PC-9 (cell line): ENCODE measurements at regions of chr12 and their contacts with region 1.

Region 1: GRCh38 chr12:26378711-26379110 is 183.3 kb downstream of the SSPN start:
- DNase-seq: no peak
- H3K4me3 ChIP-seq: no peak overlapping the region
- H3K27ac ChIP-seq: no peak overlapping the region
- H3K4me1 ChIP-seq: no peaks in the 10 kb centered on the region
- H3K27me3 ChIP-seq: no peaks in the 10 kb centered on the region
- CTCF ChIP-seq: no peak

Region 2: DNA sequence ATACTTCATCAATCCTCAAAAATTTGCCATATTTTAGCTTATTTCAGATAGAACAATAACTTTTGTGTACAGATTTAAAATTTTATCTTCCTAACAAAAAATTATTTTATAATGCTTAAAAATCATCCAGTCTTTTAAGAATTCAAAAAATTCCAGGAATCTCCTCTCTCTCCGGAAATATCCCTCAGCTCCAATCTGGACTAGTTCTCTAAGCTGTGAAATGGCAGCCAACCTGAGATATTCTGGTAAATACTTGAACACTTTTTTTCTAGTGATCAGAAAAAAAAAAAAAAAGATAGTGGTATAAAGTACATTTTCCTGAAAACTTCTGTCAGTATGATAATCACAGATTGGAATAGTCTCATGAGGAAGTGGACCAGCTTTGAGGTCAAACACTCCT is 125.8 kb before region 1 on chr12:
- CTCF ChIA-PET with region 1: no interaction called
- POLR2A ChIA-PET with region 1: interaction called, 10 read pairs
- intact Hi-C with region 1: no loop called
- DNase-seq: no peak
- H3K4me3 ChIP-seq: no peak overlapping the region
- H3K27ac ChIP-seq: no peak overlapping the region
- H3K4me1 ChIP-seq: peaks cover 15% of the 10 kb centered on the region
- H3K27me3 ChIP-seq: no peaks in the 10 kb centered on the region
- CTCF ChIP-seq: no peak

Region 3: GRCh38 chr12:26396402-26396801 is 17.7 kb after region 1 on chr12:
- CTCF ChIA-PET with region 1: no interaction called
- POLR2A ChIA-PET with region 1: interaction called, 10 read pairs
- intact Hi-C with region 1: no loop called
- DNase-seq: no peak
- H3K4me3 ChIP-seq: no peak overlapping the region
- H3K27ac ChIP-seq: no peak overlapping the region
- H3K4me1 ChIP-seq: peaks cover under 1% of the 10 kb centered on the region; the same call in 1 of the 2 replicates
- H3K27me3 ChIP-seq: no peaks in the 10 kb centered on the region
- CTCF ChIP-seq: no peak

Region 4: GRCh38 chr12:27343255-27344000 is 964.7 kb after region 1 on chr12:
- CTCF ChIA-PET with region 1: no interaction called
- POLR2A ChIA-PET with region 1: no interaction called
- intact Hi-C with region 1: no loop called
- DNase-seq: peak; percentile 57 to 96
- H3K4me3 ChIP-seq: peak overlapping the region; percentile 28; the same call in 1 of the 2 replicates
- H3K27ac ChIP-seq: peak overlapping the region; percentile 99
- H3K4me1 ChIP-seq: peaks cover 66% of the 10 kb centered on the region
- H3K27me3 ChIP-seq: no peaks in the 10 kb centered on the region
- CTCF ChIP-seq: no peak